Cardiac septum (tissue), 1 donor: ENCODE measurements at regions of chr1 and their contacts with region 1.

Region 1: DNA sequence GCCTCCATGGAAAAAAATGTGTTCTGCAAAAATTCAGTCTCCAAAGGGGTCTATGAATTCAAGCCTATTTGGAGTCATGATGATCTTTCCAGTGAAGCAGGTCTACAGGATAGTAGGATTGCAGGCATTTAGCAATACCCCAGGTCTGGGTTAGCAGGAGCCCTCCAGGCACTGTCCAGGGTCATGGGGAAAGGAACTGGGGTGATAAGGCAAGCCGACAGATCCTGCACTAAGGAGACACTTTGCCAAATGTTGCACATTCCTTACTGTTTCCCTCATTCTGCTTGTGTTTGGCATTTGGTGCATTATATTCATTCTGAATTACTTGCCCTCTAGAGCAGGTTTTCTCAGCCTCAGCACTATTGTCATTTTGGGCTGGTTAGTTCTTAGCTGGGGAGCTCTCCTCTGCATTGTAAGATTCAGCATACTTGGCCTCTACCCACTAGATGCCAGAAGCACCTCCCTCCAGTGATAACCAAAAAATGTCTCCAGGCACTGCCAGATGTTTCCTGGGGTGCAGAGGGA is 333.3 kb upstream of the PLXNA2 start:
- DNase-seq: no peak

Region 2: GRCh38 chr1:208500375-208500774 is 77.1 kb before region 1 on chr1:
- intact Hi-C with region 1: loop called (anchors 5 kb)
- DNase-seq: no peak